Activated CD4-positive, alpha-beta T cell treated with anti-CD3 and anti-CD28 coated beads for 36 hours (primary cell): ENCODE measurements at regions of chr11 and their contacts with region 1.

Region 1: GRCh38 chr11:65637794-65638317 is at the start of gene SIPA1:
- DNase-seq: peak; percentile 86
- ATAC-seq: peak; percentile 67
- H3K4me3 Mint-ChIP-seq: peak within 1 kb of the TSS; percentile 90
- H3K27ac Mint-ChIP-seq: peak within 1 kb of the TSS; percentile 95
- H3K4me1 Mint-ChIP-seq: peaks cover 42% of the 10 kb centered on the region
- H3K27me3 Mint-ChIP-seq: no peaks in the 10 kb centered on the region
- total RNA-seq, gene SIPA1: 181 to 202 TPM

Region 2: GRCh38 chr11:65545853-65546216 is 92.0 kb before region 1 on chr11:
- CTCF ChIA-PET with region 1: no interaction called
- POLR2A ChIA-PET with region 1: no interaction called
- intact Hi-C with region 1: no loop called
- DNase-seq: no peak
- ATAC-seq: peak; percentile 2
- H3K4me3 Mint-ChIP-seq: peak overlapping the region; percentile 72
- H3K27ac Mint-ChIP-seq: peak overlapping the region; percentile 87
- H3K4me1 Mint-ChIP-seq: peaks cover 48% of the 10 kb centered on the region
- H3K27me3 Mint-ChIP-seq: no peaks in the 10 kb centered on the region

Region 3: GRCh38 chr11:65588199-65589054 is 49.4 kb before region 1 on chr11:
- CTCF ChIA-PET with region 1: interaction called, 7 read pairs
- POLR2A ChIA-PET with region 1: no interaction called
- intact Hi-C with region 1: loop called in 1 of 2 experiments (anchors 1 kb)
- DNase-seq: peak; percentile 88
- ATAC-seq: peak; percentile 86
- H3K4me3 Mint-ChIP-seq: peak overlapping the region; percentile 43
- H3K27ac Mint-ChIP-seq: peak overlapping the region; percentile 90
- H3K4me1 Mint-ChIP-seq: peaks cover 39% of the 10 kb centered on the region
- H3K27me3 Mint-ChIP-seq: no peaks in the 10 kb centered on the region

Region 4: GRCh38 chr11:65625628-65626342 is 12.1 kb before region 1 on chr11:
- CTCF ChIA-PET with region 1: interaction called, 13 read pairs
- POLR2A ChIA-PET with region 1: interaction called, 6 read pairs
- intact Hi-C with region 1: no loop called
- DNase-seq: peak; percentile 73
- ATAC-seq: peak; percentile 85
- H3K4me3 Mint-ChIP-seq: no peak overlapping the region
- H3K27ac Mint-ChIP-seq: no peak overlapping the region
- H3K4me1 Mint-ChIP-seq: no peaks in the 10 kb centered on the region
- H3K27me3 Mint-ChIP-seq: no peaks in the 10 kb centered on the region

Region 5: DNA sequence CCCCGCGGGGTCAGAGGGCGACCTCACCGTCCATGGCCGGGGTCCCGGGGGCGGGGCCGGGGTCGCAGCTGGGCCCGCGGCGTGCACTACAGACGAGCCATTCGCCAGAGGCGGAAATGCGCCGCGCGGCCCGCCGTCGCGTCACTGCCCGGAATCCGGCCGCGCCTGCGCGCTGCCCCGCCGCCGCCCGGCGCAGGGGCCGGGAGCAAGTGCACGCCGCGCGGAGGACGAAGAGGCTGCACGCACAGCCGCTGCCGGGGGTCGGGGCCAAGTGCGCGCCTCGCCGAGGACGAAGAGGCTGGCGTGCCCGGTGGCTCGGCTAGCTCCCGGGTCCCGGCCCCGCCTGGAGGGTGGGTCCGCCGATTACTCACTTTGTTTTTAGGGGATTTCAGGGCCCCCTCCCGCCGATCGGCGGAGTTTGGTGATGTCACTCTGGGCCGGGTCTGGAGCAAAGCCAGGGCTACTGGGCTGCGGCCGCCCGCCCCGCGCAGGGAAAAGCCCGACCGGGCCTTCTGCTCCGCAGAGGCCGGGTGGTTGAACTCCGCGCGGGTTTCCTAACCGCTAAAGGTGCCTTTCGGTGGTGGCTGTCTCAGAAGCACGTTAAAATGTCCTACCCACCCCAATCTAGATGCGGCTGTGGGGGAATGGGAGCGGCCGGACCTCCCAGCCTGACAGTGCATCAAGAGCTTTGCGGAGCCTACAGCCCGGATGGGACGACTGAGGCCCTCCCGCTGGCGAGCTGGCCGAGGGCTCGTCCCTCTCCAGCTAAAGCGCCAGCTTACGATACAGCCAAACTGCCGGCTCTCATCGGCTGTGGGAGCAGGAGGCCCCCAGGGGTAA is 25.2 kb after region 1 on chr11 and contains the start of gene RELA:
- CTCF ChIA-PET with region 1: no interaction called
- POLR2A ChIA-PET with region 1: no interaction called
- intact Hi-C with region 1: loop called in 1 of 2 experiments (anchors 1 kb)
- DNase-seq: peak; percentile 96
- ATAC-seq: peak; percentile 90
- H3K4me3 Mint-ChIP-seq: peak within 1 kb of the TSS; percentile 88
- H3K27ac Mint-ChIP-seq: peak within 1 kb of the TSS; percentile 97
- H3K4me1 Mint-ChIP-seq: peaks cover 41% of the 10 kb centered on the region
- H3K27me3 Mint-ChIP-seq: no peaks in the 10 kb centered on the region
- total RNA-seq, gene RELA: 76.9 to 109 TPM

Region 6: GRCh38 chr11:65695456-65696241 is 57.8 kb after region 1 on chr11:
- CTCF ChIA-PET with region 1: no interaction called
- POLR2A ChIA-PET with region 1: no interaction called
- intact Hi-C with region 1: no loop called
- DNase-seq: no peak
- ATAC-seq: no peak
- H3K4me3 Mint-ChIP-seq: no peak overlapping the region
- H3K27ac Mint-ChIP-seq: no peak overlapping the region
- H3K4me1 Mint-ChIP-seq: no peaks in the 10 kb centered on the region
- H3K27me3 Mint-ChIP-seq: no peaks in the 10 kb centered on the region

Region 7: DNA sequence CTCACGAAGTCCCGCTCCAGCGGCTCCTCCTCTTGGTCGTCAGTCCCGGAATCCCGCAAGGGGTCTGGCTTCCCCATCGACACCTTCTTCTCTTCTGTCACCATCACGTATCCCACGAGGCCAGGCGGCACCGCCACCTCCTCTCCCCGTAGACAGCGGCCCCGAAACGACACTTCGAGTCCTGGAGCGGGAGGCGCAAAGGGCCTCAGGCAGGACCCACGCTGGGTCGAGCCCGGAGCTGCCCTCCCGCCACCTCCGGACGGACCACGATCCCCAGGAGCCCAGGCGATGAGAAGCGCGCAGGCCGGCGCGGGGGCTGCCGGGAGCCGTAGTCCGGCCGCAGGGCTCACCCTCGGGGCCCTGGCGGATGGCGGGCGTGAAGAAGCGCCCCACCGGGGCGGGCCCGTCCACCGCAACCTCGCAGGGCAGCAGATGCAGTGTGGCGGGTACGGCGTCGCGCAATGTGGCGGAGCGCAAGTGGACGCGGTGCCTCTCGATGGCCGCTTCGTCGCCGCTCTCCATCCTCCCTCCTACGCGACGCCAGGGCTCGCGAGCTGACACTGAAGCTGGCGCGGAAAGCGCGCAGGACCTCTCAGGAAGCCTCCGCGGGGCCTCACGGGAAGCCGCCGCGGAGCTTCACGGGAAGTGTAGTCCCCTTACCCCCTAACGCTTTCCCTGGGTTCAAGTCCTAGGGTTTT is 82.5 kb after region 1 on chr11 and contains the start of gene RNASEH2C:
- CTCF ChIA-PET with region 1: no interaction called
- POLR2A ChIA-PET with region 1: interaction called, 5 read pairs
- intact Hi-C with region 1: loop called in 1 of 2 experiments (anchors 1 kb)
- DNase-seq: peak; percentile 92
- ATAC-seq: peak; percentile 94
- H3K4me3 Mint-ChIP-seq: peak within 1 kb of the TSS; percentile 84
- H3K27ac Mint-ChIP-seq: peak within 1 kb of the TSS; percentile 88
- H3K4me1 Mint-ChIP-seq: peaks cover 23% of the 10 kb centered on the region
- H3K27me3 Mint-ChIP-seq: no peaks in the 10 kb centered on the region
- total RNA-seq, gene RNASEH2C: 72.5 to 96.8 TPM

Region 8: GRCh38 chr11:65927904-65928397 is 290.1 kb after region 1 on chr11:
- CTCF ChIA-PET with region 1: no interaction called
- POLR2A ChIA-PET with region 1: no interaction called
- intact Hi-C with region 1: no loop called
- DNase-seq: peak; percentile 88
- ATAC-seq: peak; percentile 94
- H3K4me3 Mint-ChIP-seq: peak overlapping the region; percentile 65
- H3K27ac Mint-ChIP-seq: peak overlapping the region; percentile 96
- H3K4me1 Mint-ChIP-seq: peaks cover 26% of the 10 kb centered on the region
- H3K27me3 Mint-ChIP-seq: no peaks in the 10 kb centered on the region

Region 9: GRCh38 chr11:65961232-65961901 is 323.5 kb after region 1 on chr11 and contains the start of gene SART1:
- CTCF ChIA-PET with region 1: no interaction called
- POLR2A ChIA-PET with region 1: no interaction called
- intact Hi-C with region 1: no loop called
- DNase-seq: peak; percentile 98
- ATAC-seq: peak; percentile 91
- H3K4me3 Mint-ChIP-seq: peak within 1 kb of the TSS; percentile 92
- H3K27ac Mint-ChIP-seq: peak within 1 kb of the TSS; percentile 97
- H3K4me1 Mint-ChIP-seq: peaks cover 37% of the 10 kb centered on the region
- H3K27me3 Mint-ChIP-seq: no peaks in the 10 kb centered on the region
- total RNA-seq, gene SART1: 54.7 to 84.5 TPM